ENCODE measurements at regions of chrX and their contacts with region 1.

Region 1: GRCh38 chrX:19864736-19865135 is 22.7 kb downstream of the SH3KBP1 start:
- DNase-seq: no peak
- H3K4me3 ChIP-seq: no peak overlapping the region
- H3K4me3 Mint-ChIP-seq: peak overlapping the region in 6 of 7 donors; percentile 15 to 74 (median 42)
- H3K27ac ChIP-seq: no peak overlapping the region
- H3K27ac Mint-ChIP-seq: peak overlapping the region in 7 of 8 donors; percentile 17 to 66 (median 46)
- H3K4me1 ChIP-seq: peaks cover 25% of the 10 kb centered on the region
- H3K4me1 Mint-ChIP-seq: peaks cover 48 to 78% (median 72%) of the 10 kb centered on the region in 3 donors
- H3K27me3 ChIP-seq: no peaks in the 10 kb centered on the region
- H3K27me3 Mint-ChIP-seq: peaks cover 0 to 3% of the 10 kb centered on the region in 2 donors

Region 2: DNA sequence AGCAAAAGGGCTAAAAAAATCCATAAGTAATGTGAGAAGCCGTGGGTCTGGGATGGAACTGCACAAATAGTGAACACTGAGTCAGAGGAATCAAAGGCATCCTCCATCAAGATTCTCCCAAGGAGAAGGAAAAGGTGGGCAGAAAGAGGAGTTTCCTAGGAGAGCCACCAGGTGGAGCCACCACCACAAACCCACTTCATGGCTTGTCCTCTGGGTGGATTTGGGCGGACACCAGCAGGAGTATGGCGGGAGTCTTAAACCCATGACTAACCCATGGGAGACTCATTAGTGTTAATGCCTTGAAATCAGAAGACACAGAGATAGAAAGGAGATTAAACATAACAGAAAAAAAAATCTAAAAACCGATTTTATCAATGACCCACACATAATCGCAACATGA is 125.1 kb before region 1 on chrX:
- CTCF ChIA-PET with region 1: no interaction called
- POLR2A ChIA-PET with region 1: interaction called, 16 read pairs
- DNase-seq: peak in 4 of 5 donors; percentile 28 to 57 (median 34)
- H3K4me3 ChIP-seq: no peak overlapping the region
- H3K4me3 Mint-ChIP-seq: peak overlapping the region in 4 of 7 donors; percentile 8 to 77 (median 38)
- H3K27ac ChIP-seq: no peak overlapping the region
- H3K27ac Mint-ChIP-seq: peak overlapping the region in 7 of 8 donors; percentile 27 to 88 (median 82)
- H3K4me1 ChIP-seq: peaks cover 62% of the 10 kb centered on the region
- H3K4me1 Mint-ChIP-seq: peaks cover 63 to 83% (median 77%) of the 10 kb centered on the region in 3 donors
- H3K27me3 ChIP-seq: no peaks in the 10 kb centered on the region
- H3K27me3 Mint-ChIP-seq: no peaks in the 10 kb centered on the region

Region 3: GRCh38 chrX:19981947-19982346 is 117.2 kb after region 1 on chrX:
- CTCF ChIA-PET with region 1: no interaction called
- POLR2A ChIA-PET with region 1: no interaction called
- DNase-seq: no peak
- H3K4me3 ChIP-seq: no peak overlapping the region
- H3K4me3 Mint-ChIP-seq: no peak overlapping the region
- H3K27ac ChIP-seq: no peak overlapping the region
- H3K27ac Mint-ChIP-seq: peak overlapping the region in 1 of 8 donors; percentile 26
- H3K4me1 ChIP-seq: no peaks in the 10 kb centered on the region
- H3K4me1 Mint-ChIP-seq: peaks cover 24 to 37% (median 27%) of the 10 kb centered on the region in 3 donors
- H3K27me3 ChIP-seq: no peaks in the 10 kb centered on the region
- H3K27me3 Mint-ChIP-seq: peaks cover 0 to 6% of the 10 kb centered on the region in 2 donors